Spleen (tissue), 13 donors: ENCODE measurements at regions of chr1 and their contacts with region 1.

Region 1: GRCh38 chr1:229258031-229258756 is 12.7 kb upstream of the RAB4A start:
- DNase-seq: no peak
- H3K4me3 ChIP-seq: no peak overlapping the region
- H3K27ac ChIP-seq: no peak overlapping the region
- H3K4me1 ChIP-seq: peaks cover 7 to 30% (median 18%) of the 10 kb centered on the region in 6 donors
- H3K27me3 ChIP-seq: no peaks in the 10 kb centered on the region
- CTCF ChIP-seq: peak; percentile 70 to 92 (median 85)
- POLR2A ChIP-seq: no peak

Region 2: DNA sequence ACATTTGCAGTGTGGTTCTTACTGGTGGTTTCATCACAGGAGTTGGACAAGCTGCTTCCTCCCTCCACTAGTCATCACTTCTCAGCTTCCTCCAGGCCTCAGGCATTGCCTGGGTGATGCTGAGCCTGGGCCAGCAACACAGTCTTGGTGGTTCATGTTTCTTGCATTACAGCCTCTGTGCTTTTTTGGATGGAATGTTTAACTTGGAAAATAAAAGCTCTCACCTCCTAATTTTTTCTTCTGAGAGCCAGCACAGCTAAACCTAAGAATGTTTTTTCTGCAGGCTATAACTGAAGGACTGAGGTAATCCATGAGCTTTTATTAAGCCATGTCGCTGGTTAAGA is 589.0 kb before region 1 on chr1:
- intact Hi-C with region 1: loop called (anchors 10 kb)
- DNase-seq: no peak
- H3K4me3 ChIP-seq: no peak overlapping the region
- H3K27ac ChIP-seq: no peak overlapping the region
- H3K4me1 ChIP-seq: peaks cover 0 to 4% (median 4%) of the 10 kb centered on the region in 6 donors
- H3K27me3 ChIP-seq: peaks cover 0 to 1% (median 0%) of the 10 kb centered on the region in 7 donors
- CTCF ChIP-seq: no peak
- POLR2A ChIP-seq: no peak

Region 3: GRCh38 chr1:229479660-229480399 is 221.6 kb after region 1 on chr1:
- intact Hi-C with region 1: loop called (anchors 5 kb)
- DNase-seq: no peak
- H3K4me3 ChIP-seq: no peak overlapping the region
- H3K27ac ChIP-seq: peak overlapping the region; percentile 21 to 75 (median 52)
- H3K4me1 ChIP-seq: peaks cover 0 to 44% (median 37%) of the 10 kb centered on the region in 6 donors
- H3K27me3 ChIP-seq: no peaks in the 10 kb centered on the region
- CTCF ChIP-seq: no peak
- POLR2A ChIP-seq: no peak